ENCODE measurements at regions of chr15 and their contacts with region 1.

Region 1: GRCh38 chr15:54803134-54803808 is 393.5 kb downstream of the RSL24D1 start:
- H3K4me3 Mint-ChIP-seq: no peak overlapping the region
- H3K27ac Mint-ChIP-seq: peak overlapping the region; percentile 77
- H3K4me1 Mint-ChIP-seq: peaks cover 15% of the 10 kb centered on the region
- H3K27me3 Mint-ChIP-seq: no peaks in the 10 kb centered on the region

Region 2: DNA sequence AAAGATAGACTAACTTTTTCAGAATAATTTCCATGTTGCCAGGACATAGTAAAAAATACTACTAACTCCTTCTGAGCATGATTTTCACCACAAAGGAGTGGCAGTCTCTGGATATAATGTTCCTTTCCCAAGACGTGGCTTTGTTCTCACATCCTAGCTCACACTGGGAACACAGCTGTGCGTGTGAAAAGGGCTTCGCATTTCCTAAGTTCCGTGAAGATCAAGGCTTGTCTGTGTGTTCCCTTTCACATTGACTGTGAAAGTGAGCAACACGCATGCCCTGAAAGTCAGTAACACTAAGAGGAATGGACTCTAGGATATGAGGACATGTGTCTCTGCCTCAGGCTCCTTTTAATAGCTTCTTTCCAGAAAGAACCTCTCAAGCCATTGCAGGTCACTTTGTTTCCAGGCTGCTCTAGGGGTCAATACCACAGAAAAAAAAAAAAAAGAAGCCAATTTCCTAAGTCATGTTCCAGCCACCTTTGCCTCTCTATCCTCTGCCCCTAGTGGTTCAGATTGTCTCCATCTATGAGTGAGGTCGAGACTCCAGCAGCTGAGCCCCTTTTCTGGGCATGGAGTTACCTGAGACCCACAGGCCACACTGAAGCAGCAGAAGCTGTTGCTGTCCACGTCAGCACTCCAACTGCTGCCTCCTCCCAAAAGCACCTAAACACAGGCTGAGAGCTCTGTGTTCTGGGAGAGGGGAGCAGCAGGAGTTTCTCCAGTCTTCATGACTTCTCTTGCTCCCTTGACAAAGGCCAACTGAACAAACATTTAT is 37.5 kb after region 1 on chr15:
- intact Hi-C with region 1: loop called (anchors 5 kb)
- H3K4me3 Mint-ChIP-seq: no peak overlapping the region
- H3K27ac Mint-ChIP-seq: no peak overlapping the region
- H3K4me1 Mint-ChIP-seq: peaks cover 25% of the 10 kb centered on the region
- H3K27me3 Mint-ChIP-seq: no peaks in the 10 kb centered on the region

Region 3: DNA sequence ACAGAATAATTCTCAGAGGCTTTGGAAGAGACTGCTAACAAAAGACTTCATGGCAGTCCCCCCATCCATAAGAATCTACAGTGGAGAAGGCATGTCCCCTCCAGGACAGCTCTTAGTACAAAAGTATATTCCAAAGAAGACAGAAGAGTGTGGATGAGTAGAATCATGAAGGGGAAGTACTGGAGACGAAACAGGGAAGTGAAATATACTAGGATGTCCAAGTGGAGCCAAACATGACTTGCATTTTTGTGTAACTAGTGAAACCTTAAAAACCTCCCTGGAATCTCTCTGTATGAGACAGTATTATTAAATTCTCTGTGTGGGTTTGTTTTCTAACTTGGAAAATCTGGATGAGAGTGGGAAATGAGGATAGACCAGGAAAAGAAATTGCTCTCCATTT is 81.0 kb after region 1 on chr15:
- intact Hi-C with region 1: loop called (anchors 5 kb)
- H3K4me3 Mint-ChIP-seq: peak overlapping the region; percentile 21
- H3K27ac Mint-ChIP-seq: peak overlapping the region; percentile 84
- H3K4me1 Mint-ChIP-seq: peaks cover 21% of the 10 kb centered on the region
- H3K27me3 Mint-ChIP-seq: no peaks in the 10 kb centered on the region